GM12878 (cell line): ENCODE measurements at regions of chr10 and their contacts with region 1.

Region 1: GRCh38 chr10:103491493-103492381 is 1.8 kb upstream of the NEURL1 start:
- DNase-seq: no peak
- ATAC-seq: no peak
- H3K4me3 ChIP-seq: no peak overlapping the region
- H3K27ac ChIP-seq: no peak overlapping the region
- H3K4me1 ChIP-seq: peaks cover 10% of the 10 kb centered on the region
- H3K27me3 ChIP-seq: peaks cover 13 to 15% of the 10 kb centered on the region in 2 experiments
- CTCF ChIP-seq: no peak
- EP300 ChIP-seq: no peak
- POLR2A ChIP-seq: no peak
- RAD21 ChIP-seq: no peak

Region 2: GRCh38 chr10:103470761-103471653 is 20.7 kb before region 1 on chr10:
- CTCF ChIA-PET with region 1: interaction called, 19 read pairs
- POLR2A ChIA-PET with region 1: interaction called, 13 read pairs
- RAD21 ChIA-PET with region 1: interaction called, 5 read pairs
- SMC1A ChIA-PET with region 1: interaction called, 11 read pairs
- in situ Hi-C with region 1: no loop called
- intact Hi-C with region 1: no loop called
- DNase-seq: peak; percentile 95
- ATAC-seq: peak; percentile 80
- H3K4me3 ChIP-seq: peak overlapping the region; percentile 62; the same call in 1 of the 2 replicates
- H3K27ac ChIP-seq: peak overlapping the region; percentile 93
- H3K4me1 ChIP-seq: peaks cover 69% of the 10 kb centered on the region
- H3K27me3 ChIP-seq: no peaks in the 10 kb centered on the region
- CTCF ChIP-seq: no peak
- EP300 ChIP-seq: peak in 1 of 2 experiments; percentile 50; a peak in 1 of 4 replicates
- POLR2A ChIP-seq: peak; percentile 82
- RAD21 ChIP-seq: peak; percentile 10; the same call in 1 of the 2 replicates

Region 3: DNA sequence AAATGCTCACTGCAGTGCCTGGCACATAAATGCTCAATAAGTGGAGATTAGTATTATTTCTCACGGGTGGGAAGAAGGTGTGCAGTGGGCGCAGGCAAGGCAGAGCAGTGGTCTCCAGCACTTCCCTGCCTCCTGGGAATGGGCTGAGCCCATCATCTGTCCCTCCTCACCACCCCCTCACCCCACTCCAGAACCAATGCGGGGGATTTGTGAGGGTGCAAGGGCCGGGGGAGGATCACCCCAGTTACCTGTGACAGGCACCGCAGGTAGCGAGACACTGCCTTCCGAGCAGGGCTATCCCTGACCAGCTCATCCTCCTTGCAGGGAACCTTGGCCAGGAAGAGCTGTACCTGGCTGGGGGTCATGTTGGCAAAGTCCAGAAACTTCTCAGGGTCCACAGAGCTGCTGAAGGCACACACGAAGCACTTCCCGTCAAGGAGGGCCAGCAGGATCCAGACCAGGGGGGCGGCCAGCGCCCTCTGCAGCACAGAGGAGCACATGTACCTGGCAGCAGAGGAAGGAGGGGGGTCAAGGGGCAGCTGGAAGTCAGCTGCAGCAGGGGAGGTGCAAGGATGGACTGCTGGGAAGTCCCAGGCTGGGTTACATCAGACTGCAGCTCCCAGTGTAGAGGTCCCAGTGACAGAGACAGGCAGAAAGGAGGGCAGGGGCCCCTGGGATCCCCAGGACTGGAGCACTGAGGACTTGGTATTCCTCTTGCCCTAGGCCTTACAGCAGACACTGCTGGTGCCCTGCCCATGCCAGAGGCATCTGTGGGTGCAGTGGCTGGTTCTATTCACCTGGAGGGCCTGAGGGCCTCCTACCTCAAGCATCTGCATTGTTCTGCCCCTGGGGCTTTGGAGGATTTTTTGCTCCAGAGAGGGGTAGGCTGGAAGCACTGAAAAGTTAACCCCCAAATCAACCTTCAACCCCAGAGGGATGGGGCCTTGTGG is 15.4 kb before region 1 on chr10:
- CTCF ChIA-PET with region 1: interaction called, 19 read pairs
- POLR2A ChIA-PET with region 1: interaction called, 13 read pairs
- RAD21 ChIA-PET with region 1: interaction called, 3 read pairs
- SMC1A ChIA-PET with region 1: interaction called, 11 read pairs
- in situ Hi-C with region 1: no loop called
- intact Hi-C with region 1: no loop called
- DNase-seq: no peak
- ATAC-seq: peak; percentile 80
- H3K4me3 ChIP-seq: no peak overlapping the region
- H3K27ac ChIP-seq: no peak overlapping the region
- H3K4me1 ChIP-seq: peaks cover 29% of the 10 kb centered on the region
- H3K27me3 ChIP-seq: no peaks in the 10 kb centered on the region
- CTCF ChIP-seq: peak; percentile 55 to 80 (median 67)
- EP300 ChIP-seq: no peak
- POLR2A ChIP-seq: no peak
- RAD21 ChIP-seq: peak; percentile 66

Region 4: GRCh38 chr10:103542764-103543616 is 51.3 kb after region 1 on chr10:
- CTCF ChIA-PET with region 1: interaction called, 8 read pairs
- POLR2A ChIA-PET with region 1: no interaction called
- RAD21 ChIA-PET with region 1: interaction called, 9 read pairs
- SMC1A ChIA-PET with region 1: no interaction called
- in situ Hi-C with region 1: no loop called
- intact Hi-C with region 1: loop called (anchors 2 kb)
- DNase-seq: peak; percentile 13
- ATAC-seq: peak; percentile 82
- H3K4me3 ChIP-seq: peak overlapping the region; percentile 57
- H3K27ac ChIP-seq: no peak overlapping the region
- H3K4me1 ChIP-seq: peaks cover 11% of the 10 kb centered on the region
- H3K27me3 ChIP-seq: no peaks in the 10 kb centered on the region; a peak in 2 of 4 replicates
- CTCF ChIP-seq: peak; percentile 28 to 56 (median 45)
- EP300 ChIP-seq: no peak
- POLR2A ChIP-seq: no peak
- RAD21 ChIP-seq: peak; percentile 33; the same call in 1 of the 2 replicates

Region 5: DNA sequence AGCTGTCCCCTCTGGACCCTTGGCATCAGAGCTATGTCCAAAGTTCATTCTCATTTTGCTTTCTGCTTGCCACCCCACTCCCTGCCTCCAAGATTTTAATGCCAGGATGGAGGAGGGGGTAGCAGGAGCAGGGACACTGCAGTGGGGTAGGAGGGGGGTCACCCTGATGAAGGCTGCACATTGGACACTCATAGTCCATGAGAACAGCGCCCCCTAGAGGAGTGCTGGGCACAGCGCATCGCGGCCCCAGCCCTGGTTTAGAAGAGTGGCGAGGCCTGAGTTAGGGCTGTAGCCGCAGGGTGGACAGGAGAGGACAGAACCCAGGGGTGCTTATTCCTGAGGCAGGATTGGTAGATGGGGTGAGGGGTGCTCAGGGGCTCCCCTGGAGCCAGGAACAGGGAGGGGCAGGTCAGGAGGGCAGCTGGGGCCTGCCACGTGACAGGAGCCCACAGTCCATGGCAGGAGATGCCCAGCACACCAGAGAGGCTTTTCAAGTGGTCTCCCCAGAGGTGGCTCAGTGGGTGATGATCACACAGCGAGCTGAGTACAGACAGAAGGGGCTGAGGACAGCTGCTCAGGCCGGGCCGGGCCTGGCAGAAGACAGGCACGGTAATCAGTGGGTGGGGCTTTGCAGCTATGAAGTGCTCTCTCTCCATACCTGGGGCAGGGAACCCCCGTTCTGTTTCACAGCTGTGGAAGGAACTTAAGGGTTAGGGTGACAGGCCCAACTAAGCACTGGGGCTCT is 73.2 kb after region 1 on chr10:
- CTCF ChIA-PET with region 1: interaction called, 11 read pairs
- POLR2A ChIA-PET with region 1: no interaction called
- RAD21 ChIA-PET with region 1: interaction called, 5 read pairs
- SMC1A ChIA-PET with region 1: no interaction called
- in situ Hi-C with region 1: no loop called
- intact Hi-C with region 1: no loop called
- DNase-seq: no peak
- ATAC-seq: peak; percentile 81
- H3K4me3 ChIP-seq: no peak overlapping the region
- H3K27ac ChIP-seq: no peak overlapping the region
- H3K4me1 ChIP-seq: no peaks in the 10 kb centered on the region
- H3K27me3 ChIP-seq: no peaks in the 10 kb centered on the region
- CTCF ChIP-seq: peak; percentile 44 to 78 (median 75)
- EP300 ChIP-seq: no peak
- POLR2A ChIP-seq: no peak
- RAD21 ChIP-seq: peak; percentile 44

Region 6: GRCh38 chr10:103592186-103593021 is 100.7 kb after region 1 on chr10:
- CTCF ChIA-PET with region 1: interaction called, 10 read pairs
- POLR2A ChIA-PET with region 1: no interaction called
- RAD21 ChIA-PET with region 1: interaction called, 10 read pairs
- SMC1A ChIA-PET with region 1: interaction called, 4 read pairs
- in situ Hi-C with region 1: no loop called
- intact Hi-C with region 1: no loop called
- DNase-seq: no peak
- ATAC-seq: peak; percentile 95
- H3K4me3 ChIP-seq: no peak overlapping the region
- H3K27ac ChIP-seq: no peak overlapping the region
- H3K4me1 ChIP-seq: no peaks in the 10 kb centered on the region
- H3K27me3 ChIP-seq: no peaks in the 10 kb centered on the region
- CTCF ChIP-seq: peak; percentile 73 to 79 (median 77)
- EP300 ChIP-seq: no peak
- POLR2A ChIP-seq: no peak; the same call in none of the 2 replicates
- RAD21 ChIP-seq: peak; percentile 73

Region 7: DNA sequence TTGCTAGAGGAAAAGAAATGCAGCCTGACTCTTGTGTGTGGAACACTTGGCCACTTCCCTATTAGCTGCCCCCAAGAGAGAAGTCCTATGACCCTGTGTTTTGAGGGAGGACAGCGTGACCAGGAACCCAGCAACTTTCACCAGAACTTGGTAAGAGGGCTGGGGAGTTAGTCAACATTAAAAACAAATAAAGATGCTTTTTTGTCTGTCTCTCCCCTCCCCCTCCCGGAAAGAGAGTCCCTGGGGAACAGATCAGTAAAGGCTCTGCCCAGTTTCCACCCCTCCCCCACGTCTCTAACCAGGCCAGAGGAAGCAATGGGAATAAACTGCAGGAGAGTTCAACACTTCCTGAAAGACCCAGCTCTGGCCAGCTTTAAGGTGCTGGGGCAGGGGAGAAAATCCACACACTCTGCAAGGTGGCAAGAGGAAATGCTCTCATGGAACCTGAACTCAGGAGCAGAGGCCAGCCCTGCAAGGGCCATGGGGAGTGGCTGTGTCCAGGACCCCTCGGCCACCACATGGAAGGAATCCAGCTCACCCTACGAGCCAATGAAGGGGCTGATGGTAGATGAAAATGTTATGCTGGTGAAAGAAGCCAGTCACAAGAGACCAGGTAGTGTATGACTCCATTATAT is 342.1 kb after region 1 on chr10:
- CTCF ChIA-PET with region 1: no interaction called
- POLR2A ChIA-PET with region 1: no interaction called
- RAD21 ChIA-PET with region 1: no interaction called
- SMC1A ChIA-PET with region 1: no interaction called
- in situ Hi-C with region 1: no loop called
- intact Hi-C with region 1: no loop called
- DNase-seq: no peak
- ATAC-seq: no peak
- H3K4me3 ChIP-seq: no peak overlapping the region
- H3K27ac ChIP-seq: no peak overlapping the region
- H3K4me1 ChIP-seq: no peaks in the 10 kb centered on the region
- H3K27me3 ChIP-seq: peaks cover 0 to 2% of the 10 kb centered on the region in 2 experiments; a peak in 2 of 4 replicates
- CTCF ChIP-seq: no peak
- EP300 ChIP-seq: no peak
- POLR2A ChIP-seq: no peak
- RAD21 ChIP-seq: no peak